CD4-positive, alpha-beta T cell (primary cell): ENCODE measurements at regions of chr7 and their contacts with region 1.

Region 1: GRCh38 chr7:32942786-32943653 is 14.2 kb upstream of the FKBP9 start:
- DNase-seq: peak; percentile 31 to 84 (median 62)
- ATAC-seq: peak; percentile 89
- H3K4me3 ChIP-seq: peak overlapping the region; percentile 63
- H3K4me3 Mint-ChIP-seq: peak overlapping the region; percentile 85
- H3K27ac ChIP-seq: no peak overlapping the region
- H3K27ac Mint-ChIP-seq: no peak overlapping the region
- H3K4me1 ChIP-seq: peaks cover 11% of the 10 kb centered on the region
- H3K4me1 Mint-ChIP-seq: peaks cover 11% of the 10 kb centered on the region
- H3K27me3 ChIP-seq: no peaks in the 10 kb centered on the region
- H3K27me3 Mint-ChIP-seq: peaks cover 25% of the 10 kb centered on the region
- CTCF ChIP-seq: peak; percentile 69

Region 2: DNA sequence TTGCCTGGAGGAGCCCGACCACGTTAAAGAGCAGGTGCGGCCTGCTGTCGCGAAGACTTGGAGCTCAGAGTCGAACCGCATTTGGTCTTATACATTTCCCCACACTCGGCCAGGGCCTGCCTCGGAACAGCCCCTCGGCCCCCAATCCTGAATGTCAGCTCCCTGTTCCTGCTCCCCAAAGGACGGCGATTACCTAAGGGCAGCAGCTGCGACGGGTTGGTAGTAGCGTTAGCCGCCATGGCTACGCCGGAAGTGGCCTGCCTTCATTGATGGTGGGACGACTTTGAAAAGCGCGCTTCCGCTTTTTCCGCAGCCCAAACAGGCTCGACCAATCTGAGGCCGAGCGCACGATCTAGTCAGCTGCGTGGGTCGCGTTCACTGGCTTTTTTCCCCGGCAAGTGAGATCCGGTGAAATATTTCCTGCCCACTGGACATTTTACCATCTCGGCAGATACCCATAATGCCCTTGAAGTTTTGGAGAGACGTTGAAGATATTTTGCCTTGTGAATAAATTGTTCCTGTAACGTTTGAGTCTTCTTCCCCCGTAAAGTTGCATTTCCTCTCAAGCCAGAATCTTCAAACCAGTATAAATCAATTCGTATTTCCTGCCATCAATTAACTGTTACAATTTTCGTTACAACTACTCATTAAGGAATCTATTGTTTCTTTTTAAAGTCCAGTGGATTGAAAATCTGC is 452.7 kb before region 1 on chr7 and contains the start of gene LSM5:
- CTCF ChIA-PET with region 1: interaction called, 3 read pairs
- POLR2A ChIA-PET with region 1: no interaction called
- intact Hi-C with region 1: loop called in 1 of 2 experiments (anchors 5 kb)
- DNase-seq: peak; percentile 80 to 96 (median 85)
- ATAC-seq: peak; percentile 67
- H3K4me3 ChIP-seq: peak within 1 kb of the TSS; percentile 68
- H3K4me3 Mint-ChIP-seq: peak within 1 kb of the TSS; percentile 92
- H3K27ac ChIP-seq: peak within 1 kb of the TSS; percentile 83 to 84
- H3K27ac Mint-ChIP-seq: peak within 1 kb of the TSS; percentile 92
- H3K4me1 ChIP-seq: peaks cover 16% of the 10 kb centered on the region
- H3K4me1 Mint-ChIP-seq: peaks cover 42% of the 10 kb centered on the region
- H3K27me3 ChIP-seq: no peaks in the 10 kb centered on the region
- H3K27me3 Mint-ChIP-seq: no peaks in the 10 kb centered on the region
- CTCF ChIP-seq: no peak
- total RNA-seq, gene LSM5: 28.2 to 28.7 TPM

Region 3: DNA sequence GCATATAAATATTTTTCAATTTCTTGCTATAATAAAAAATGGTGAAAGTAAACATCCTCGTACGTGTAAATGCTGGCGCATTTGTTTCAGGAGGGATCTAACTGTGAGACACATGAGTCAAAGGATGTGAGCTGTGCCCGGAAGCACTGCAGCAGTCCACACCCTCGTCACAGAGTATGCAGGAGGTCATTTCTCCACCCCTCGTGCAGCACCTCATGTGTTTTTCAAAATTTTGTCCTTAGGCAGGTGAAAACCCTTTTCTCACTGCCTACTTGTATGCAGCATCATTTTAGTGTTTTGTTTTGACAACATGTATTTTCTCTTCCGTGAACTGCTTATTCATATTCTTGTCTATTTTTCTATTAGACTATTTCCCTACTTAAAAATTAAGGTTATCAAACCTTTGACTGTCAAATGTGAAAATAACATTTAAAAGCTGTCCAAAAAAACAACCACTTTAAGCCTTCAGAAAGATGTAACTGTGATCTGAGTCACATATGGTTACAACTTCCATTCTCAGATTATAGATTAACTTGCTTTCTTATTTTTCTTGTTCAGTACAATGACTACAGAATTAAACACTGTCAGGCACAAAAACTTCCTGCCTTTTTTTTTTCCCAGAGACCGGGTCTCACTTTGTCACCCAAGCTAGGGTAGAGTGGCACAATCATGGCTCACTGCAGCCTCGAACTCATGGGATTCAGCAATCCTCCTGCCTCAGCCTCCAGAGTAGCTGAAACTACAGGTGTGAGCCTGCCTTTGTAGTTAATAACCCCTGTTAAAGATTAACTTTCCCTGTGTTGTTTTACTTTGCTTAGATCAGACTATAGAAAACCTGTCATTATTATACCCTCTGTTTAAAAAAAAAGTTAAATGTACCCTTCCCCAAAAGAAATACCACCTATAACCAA is 284.7 kb before region 1 on chr7:
- CTCF ChIA-PET with region 1: no interaction called
- POLR2A ChIA-PET with region 1: no interaction called
- intact Hi-C with region 1: no loop called
- DNase-seq: no peak
- ATAC-seq: no peak
- H3K4me3 ChIP-seq: no peak overlapping the region
- H3K4me3 Mint-ChIP-seq: no peak overlapping the region
- H3K27ac ChIP-seq: no peak overlapping the region
- H3K27ac Mint-ChIP-seq: no peak overlapping the region
- H3K4me1 ChIP-seq: no peaks in the 10 kb centered on the region
- H3K4me1 Mint-ChIP-seq: no peaks in the 10 kb centered on the region
- H3K27me3 ChIP-seq: no peaks in the 10 kb centered on the region
- H3K27me3 Mint-ChIP-seq: peaks cover 17% of the 10 kb centered on the region
- CTCF ChIP-seq: no peak

Region 4: GRCh38 chr7:32761451-32762205 is 181.4 kb before region 1 on chr7:
- CTCF ChIA-PET with region 1: no interaction called
- POLR2A ChIA-PET with region 1: no interaction called
- intact Hi-C with region 1: loop called (anchors 5 to 10 kb)
- DNase-seq: peak in 1 of 14 experiments; percentile 8
- ATAC-seq: no peak
- H3K4me3 ChIP-seq: no peak overlapping the region
- H3K4me3 Mint-ChIP-seq: no peak overlapping the region
- H3K27ac ChIP-seq: no peak overlapping the region
- H3K27ac Mint-ChIP-seq: no peak overlapping the region
- H3K4me1 ChIP-seq: peaks cover 3% of the 10 kb centered on the region
- H3K4me1 Mint-ChIP-seq: peaks cover 11% of the 10 kb centered on the region
- H3K27me3 ChIP-seq: peaks cover 25 to 42% of the 10 kb centered on the region in 2 experiments
- H3K27me3 Mint-ChIP-seq: peaks cover 73% of the 10 kb centered on the region
- CTCF ChIP-seq: no peak

Region 5: GRCh38 chr7:32846701-32847100 is 96.3 kb before region 1 on chr7:
- CTCF ChIA-PET with region 1: interaction called, 38 read pairs
- POLR2A ChIA-PET with region 1: interaction called, 19 read pairs
- intact Hi-C with region 1: loop called (anchors 1 kb)
- DNase-seq: peak; percentile 84 to 97 (median 91)
- ATAC-seq: peak; percentile 100
- H3K4me3 ChIP-seq: no peak overlapping the region
- H3K4me3 Mint-ChIP-seq: no peak overlapping the region
- H3K27ac ChIP-seq: no peak overlapping the region
- H3K27ac Mint-ChIP-seq: no peak overlapping the region
- H3K4me1 ChIP-seq: peaks cover 5% of the 10 kb centered on the region
- H3K4me1 Mint-ChIP-seq: peaks cover 6% of the 10 kb centered on the region
- H3K27me3 ChIP-seq: peaks cover 3 to 4% of the 10 kb centered on the region in 2 experiments
- H3K27me3 Mint-ChIP-seq: peaks cover 28% of the 10 kb centered on the region
- CTCF ChIP-seq: peak; percentile 90

Region 6: DNA sequence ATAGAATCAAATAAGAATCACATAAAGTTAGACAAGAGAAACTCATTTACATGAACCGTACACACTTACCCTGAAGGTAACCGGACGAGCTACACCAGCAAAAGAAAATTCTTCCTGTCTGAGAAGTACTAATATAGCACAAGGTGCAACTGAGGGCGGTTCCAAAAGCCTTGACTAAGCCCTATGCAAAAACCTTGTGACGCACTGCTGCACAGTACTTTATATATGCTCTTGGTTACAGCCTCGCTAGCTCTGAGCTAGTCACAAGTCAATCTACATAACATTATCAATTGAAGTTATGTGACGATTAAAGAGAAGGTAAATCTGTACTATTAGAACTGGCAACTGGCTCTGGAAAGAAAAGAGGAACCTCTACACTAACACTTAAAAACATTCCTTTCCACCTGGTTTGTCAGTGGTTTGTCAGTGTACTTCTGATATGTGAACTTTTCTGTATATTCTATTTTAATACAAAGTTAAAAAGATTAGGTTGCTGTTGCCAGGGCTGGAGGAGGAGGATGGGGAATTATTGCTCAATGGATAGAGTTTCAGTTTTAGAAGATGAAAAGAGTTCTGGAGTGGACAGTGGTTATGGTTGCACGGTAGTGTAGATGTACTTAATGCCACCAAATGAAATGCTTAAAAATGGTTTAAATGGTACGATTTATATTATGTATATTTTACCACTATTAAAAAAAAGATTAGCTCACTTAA is 97.9 kb after region 1 on chr7:
- CTCF ChIA-PET with region 1: interaction called, 3 read pairs
- POLR2A ChIA-PET with region 1: no interaction called
- intact Hi-C with region 1: loop called in 1 of 2 experiments (anchors 5 kb)
- DNase-seq: peak; percentile 44 to 90 (median 58)
- ATAC-seq: peak; percentile 99
- H3K4me3 ChIP-seq: peak overlapping the region; percentile 45
- H3K4me3 Mint-ChIP-seq: peak overlapping the region; percentile 89
- H3K27ac ChIP-seq: peak overlapping the region; percentile 56 to 75
- H3K27ac Mint-ChIP-seq: peak overlapping the region; percentile 98
- H3K4me1 ChIP-seq: peaks cover 5% of the 10 kb centered on the region
- H3K4me1 Mint-ChIP-seq: peaks cover 70% of the 10 kb centered on the region
- H3K27me3 ChIP-seq: no peaks in the 10 kb centered on the region
- H3K27me3 Mint-ChIP-seq: no peaks in the 10 kb centered on the region
- CTCF ChIP-seq: no peak